A549 (cell line): ENCODE measurements at regions of chr19 and their contacts with region 1.

Region 1: GRCh38 chr19:17496337-17496997 is 15.0 kb upstream of the PGLS start:
- DNase-seq: peak; percentile 66 to 84
- ATAC-seq: peak; percentile 92 to 97
- H3K4me3 ChIP-seq: no peak overlapping the region
- H3K27ac ChIP-seq: no peak overlapping the region
- H3K4me1 ChIP-seq: peaks cover 7% of the 10 kb centered on the region; the same call in 1 of the 3 replicates
- CTCF ChIP-seq: peak; percentile 80
- EP300 ChIP-seq: no peak
- POLR2A ChIP-seq: no peak
- RAD21 ChIP-seq: peak; percentile 43 to 47

Region 2: GRCh38 chr19:17419621-17420466 is 76.6 kb before region 1 on chr19 and contains the start of gene MVB12A:
- CTCF ChIA-PET with region 1: no interaction called
- POLR2A ChIA-PET with region 1: no interaction called
- DNase-seq: peak; percentile 86 to 99
- ATAC-seq: peak; percentile 93 to 95
- H3K4me3 ChIP-seq: peak within 1 kb of the TSS; percentile 95
- H3K27ac ChIP-seq: peak within 1 kb of the TSS; percentile 82 to 93
- H3K4me1 ChIP-seq: peaks cover 10% of the 10 kb centered on the region; the same call in 2 of the 3 replicates
- CTCF ChIP-seq: no peak
- EP300 ChIP-seq: no peak
- POLR2A ChIP-seq: peak; percentile 25; the same call in 1 of the 2 replicates
- RAD21 ChIP-seq: no peak
- polyA plus RNA-seq, gene MVB12A: 18.3 and 19.1 TPM in 2 replicates

Region 3: DNA sequence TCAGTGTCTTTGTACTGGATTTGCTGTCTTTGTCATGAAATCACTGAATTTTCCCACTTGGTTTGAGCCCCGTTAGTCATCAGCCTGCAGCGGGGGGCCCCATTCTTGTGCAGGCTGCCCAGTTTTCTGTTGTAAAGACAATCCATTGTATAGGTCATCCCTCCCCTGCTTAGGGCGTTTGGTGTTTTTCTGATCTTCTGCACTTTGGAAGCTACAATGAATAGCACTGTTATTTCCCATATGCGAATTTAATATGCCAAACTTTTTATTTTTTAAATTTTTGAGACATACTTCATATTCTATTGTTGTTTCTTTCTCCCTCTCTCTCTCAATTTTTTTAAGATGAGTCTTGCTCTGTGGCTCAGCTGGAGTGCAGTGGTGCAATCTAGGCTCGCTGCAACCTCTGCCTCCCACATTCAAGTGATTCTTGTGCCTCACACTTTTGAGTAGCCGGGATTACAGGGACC is 17.1 kb before region 1 on chr19:
- CTCF ChIA-PET with region 1: interaction called, 10 read pairs
- POLR2A ChIA-PET with region 1: no interaction called
- DNase-seq: no peak
- ATAC-seq: no peak
- H3K4me3 ChIP-seq: no peak overlapping the region
- H3K27ac ChIP-seq: no peak overlapping the region
- H3K4me1 ChIP-seq: no peaks in the 10 kb centered on the region
- CTCF ChIP-seq: no peak
- EP300 ChIP-seq: no peak
- POLR2A ChIP-seq: no peak
- RAD21 ChIP-seq: no peak

Region 4: DNA sequence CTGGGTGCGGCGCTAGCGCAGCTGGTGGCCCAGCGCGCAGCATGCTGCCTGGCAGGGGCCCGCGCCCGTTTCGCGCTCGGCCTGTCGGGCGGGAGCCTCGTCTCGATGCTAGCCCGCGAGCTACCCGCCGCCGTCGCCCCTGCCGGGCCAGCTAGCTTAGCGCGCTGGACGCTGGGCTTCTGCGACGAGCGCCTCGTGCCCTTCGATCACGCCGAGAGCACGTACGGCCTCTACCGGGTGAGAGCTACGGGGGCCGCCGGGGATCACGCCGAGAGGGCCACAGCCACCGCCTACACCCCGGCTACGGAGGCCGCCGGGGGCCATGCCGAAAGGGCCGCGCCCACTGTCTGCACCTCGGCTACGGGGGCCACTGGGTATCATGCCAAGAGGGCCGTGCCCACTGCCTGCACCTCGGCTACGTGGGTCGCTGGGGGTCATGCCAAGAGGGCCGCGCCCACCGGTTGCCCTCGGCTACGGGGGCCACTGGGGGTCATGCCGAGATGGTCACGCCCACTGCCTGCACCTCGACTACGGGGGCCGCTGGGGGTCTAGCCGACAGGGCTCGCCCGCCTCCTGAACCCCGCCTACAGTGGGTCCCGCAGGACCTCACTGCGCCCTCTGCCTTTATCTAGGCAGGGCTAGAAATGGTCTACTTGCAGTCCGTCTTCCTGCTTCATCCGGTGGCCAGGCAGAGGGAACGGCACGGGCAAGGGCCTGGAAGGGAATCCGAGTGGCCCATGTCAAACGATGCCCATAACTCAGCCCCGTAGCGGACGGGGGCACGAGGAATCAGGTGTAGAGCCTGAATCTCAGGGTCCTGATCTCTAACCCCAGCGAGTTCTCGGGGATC is 15.5 kb after region 1 on chr19:
- CTCF ChIA-PET with region 1: interaction called, 28 read pairs
- POLR2A ChIA-PET with region 1: interaction called, 3 read pairs
- DNase-seq: peak; percentile 47 to 86
- ATAC-seq: peak; percentile 79 to 81
- H3K4me3 ChIP-seq: peak overlapping the region; percentile 100
- H3K27ac ChIP-seq: peak overlapping the region; percentile 100
- H3K4me1 ChIP-seq: peaks cover 13% of the 10 kb centered on the region
- CTCF ChIP-seq: 0 out of 3 replicates have a peak, but pooled peaks have one; percentile 5
- EP300 ChIP-seq: no peak
- POLR2A ChIP-seq: peak; percentile 19; the same call in 1 of the 2 replicates
- RAD21 ChIP-seq: no peak

Region 5: DNA sequence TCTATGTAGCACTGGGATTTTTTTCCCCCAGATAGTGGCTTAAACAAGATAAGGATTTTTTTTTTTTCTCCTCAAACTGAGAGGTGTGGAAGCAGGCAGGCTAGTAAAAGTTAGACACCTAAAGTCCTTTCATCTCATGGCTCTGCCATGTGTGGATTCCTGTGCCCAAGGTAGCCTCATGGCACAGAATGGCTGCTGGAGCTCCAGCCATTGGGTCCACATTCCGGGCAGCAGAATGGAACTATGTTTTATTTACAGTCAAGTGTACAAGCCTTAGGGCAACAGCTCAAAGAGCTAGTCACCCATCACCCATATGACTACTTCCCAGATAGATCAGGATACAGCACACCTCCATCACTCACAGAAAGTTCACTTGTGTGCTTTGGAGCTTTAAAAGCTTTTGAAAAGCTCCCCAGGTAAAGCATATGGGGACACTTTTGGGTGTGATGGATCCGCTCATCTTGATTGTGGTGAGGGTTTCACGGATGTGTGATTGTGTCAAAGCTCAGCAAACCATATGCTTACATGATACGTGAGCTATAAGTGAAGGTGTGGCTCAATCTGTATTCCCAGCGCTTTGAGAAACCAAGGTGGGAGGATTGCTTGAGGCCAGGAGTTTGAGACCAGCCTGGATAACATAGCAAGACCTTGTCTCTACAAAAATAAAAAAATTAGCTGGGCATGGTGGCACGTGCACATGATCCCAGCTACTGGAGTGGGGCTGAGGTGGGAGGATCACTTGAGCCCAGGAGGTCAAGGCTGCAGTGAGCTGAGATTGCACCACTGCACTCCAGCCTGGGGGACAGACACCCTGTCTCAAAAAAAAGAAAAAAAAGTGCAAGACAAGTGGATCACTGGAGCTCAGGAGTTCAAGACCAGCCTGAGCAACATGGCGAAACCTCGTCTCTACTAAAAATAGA is 33.0 kb after region 1 on chr19:
- CTCF ChIA-PET with region 1: interaction called, 10 read pairs
- POLR2A ChIA-PET with region 1: no interaction called
- DNase-seq: no peak
- ATAC-seq: no peak
- H3K4me3 ChIP-seq: no peak overlapping the region
- H3K27ac ChIP-seq: no peak overlapping the region
- H3K4me1 ChIP-seq: 0 out of 3 replicates have a peak, but pooled peaks cover 4% of the 10 kb centered on the region
- CTCF ChIP-seq: no peak
- EP300 ChIP-seq: no peak
- POLR2A ChIP-seq: no peak
- RAD21 ChIP-seq: no peak

Region 6: GRCh38 chr19:17658666-17659065 is 162.2 kb after region 1 on chr19:
- CTCF ChIA-PET with region 1: no interaction called
- POLR2A ChIA-PET with region 1: no interaction called
- DNase-seq: no peak
- ATAC-seq: no peak
- H3K4me3 ChIP-seq: no peak overlapping the region
- H3K27ac ChIP-seq: no peak overlapping the region
- H3K4me1 ChIP-seq: no peaks in the 10 kb centered on the region
- CTCF ChIP-seq: no peak
- EP300 ChIP-seq: no peak
- POLR2A ChIP-seq: no peak
- RAD21 ChIP-seq: no peak